ENCODE measurements at regions of chr6 and their contacts with region 1.

Region 1: GRCh38 chr6:43769526-43770416 is at the start of gene VEGFA:
- DNase-seq: peak; percentile 83
- H3K4me3 Mint-ChIP-seq: peak within 1 kb of the TSS; percentile 97
- H3K27ac Mint-ChIP-seq: peak within 1 kb of the TSS; percentile 95
- H3K4me1 Mint-ChIP-seq: peaks cover 29% of the 10 kb centered on the region
- H3K27me3 Mint-ChIP-seq: peaks cover 5% of the 10 kb centered on the region
- total RNA-seq, gene VEGFA: 42.3 and 43.2 TPM in 2 replicates

Region 2: DNA sequence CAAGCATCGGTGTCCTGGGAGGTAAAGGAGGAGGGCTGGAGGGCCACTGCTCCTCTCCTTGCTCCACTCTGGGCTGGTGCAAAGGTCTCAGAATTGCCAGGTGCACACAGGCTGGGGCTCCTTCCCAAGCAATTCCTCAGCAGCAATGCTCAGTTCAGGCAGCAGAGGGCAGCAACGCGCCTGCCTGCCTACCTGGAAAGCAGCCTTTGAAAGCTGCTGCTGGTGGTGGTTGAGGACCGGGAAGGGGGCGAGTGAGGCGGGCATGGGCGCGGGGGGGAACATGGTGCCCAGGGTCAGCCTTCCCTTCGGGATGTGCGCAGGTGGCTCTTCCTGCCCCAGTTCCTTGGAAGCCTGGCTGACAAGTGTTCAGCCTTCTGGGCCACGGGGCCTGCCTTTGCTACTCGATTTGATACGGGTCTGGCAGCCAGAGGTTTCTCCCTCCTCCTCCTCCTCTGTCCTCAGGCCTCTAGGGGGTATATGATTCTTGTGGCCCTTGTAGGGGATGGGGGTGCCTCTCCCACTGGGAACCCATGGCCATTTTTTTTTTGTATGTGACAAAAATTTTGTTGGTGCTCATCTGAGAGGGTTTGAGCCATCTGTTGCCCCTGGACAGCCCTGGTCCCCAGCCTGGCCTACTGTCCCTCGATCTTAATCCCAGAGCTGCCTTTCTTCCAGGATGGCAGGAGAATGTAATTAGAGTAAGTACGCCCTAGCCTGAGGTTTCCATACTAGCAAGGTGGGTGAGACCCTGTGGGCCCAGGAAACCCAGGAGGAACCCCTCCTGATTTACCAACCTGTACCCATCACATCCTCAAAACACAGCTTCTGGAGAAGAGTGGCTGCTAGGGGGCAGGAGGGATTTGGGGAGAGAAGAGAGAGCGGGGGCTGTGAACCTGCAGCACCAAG is 102.3 kb before region 1 on chr6:
- intact Hi-C with region 1: loop called (anchors 1 kb)
- DNase-seq: peak; percentile 66
- H3K4me3 Mint-ChIP-seq: peak overlapping the region; percentile 51
- H3K27ac Mint-ChIP-seq: peak overlapping the region; percentile 65
- H3K4me1 Mint-ChIP-seq: peaks cover 49% of the 10 kb centered on the region
- H3K27me3 Mint-ChIP-seq: no peaks in the 10 kb centered on the region

Region 3: DNA sequence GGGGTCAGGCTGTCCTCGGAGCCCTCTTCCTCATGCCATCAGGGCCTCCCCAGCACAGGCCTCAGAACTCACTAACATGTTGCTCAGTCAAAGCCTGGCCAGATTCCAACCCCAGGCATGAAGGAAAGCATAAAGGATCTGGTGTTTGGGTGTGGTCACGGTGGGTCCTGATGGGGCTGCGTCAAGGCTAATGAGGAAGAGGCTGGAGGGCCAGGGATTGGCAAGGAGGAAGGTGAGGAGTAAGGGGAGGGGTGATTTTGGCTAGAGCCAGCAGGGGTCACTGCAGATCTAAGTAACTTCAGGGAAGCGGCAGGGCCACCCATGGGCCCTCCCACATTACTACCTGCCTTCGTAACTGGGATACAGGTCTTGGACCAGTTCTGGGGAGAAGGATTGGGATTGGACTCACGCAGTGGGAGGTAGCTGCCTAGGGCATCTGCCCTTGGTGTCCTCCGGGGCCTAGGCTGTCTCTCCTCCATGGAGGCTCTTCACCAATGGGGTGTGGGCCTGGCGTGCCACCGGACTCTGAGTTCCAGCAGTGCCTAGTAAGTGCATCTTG is 46.0 kb before region 1 on chr6:
- intact Hi-C with region 1: loop called (anchors 1 kb)
- DNase-seq: peak; percentile 50
- H3K4me3 Mint-ChIP-seq: no peak overlapping the region
- H3K27ac Mint-ChIP-seq: no peak overlapping the region
- H3K4me1 Mint-ChIP-seq: peaks cover 32% of the 10 kb centered on the region
- H3K27me3 Mint-ChIP-seq: peaks cover 6% of the 10 kb centered on the region

Region 4: DNA sequence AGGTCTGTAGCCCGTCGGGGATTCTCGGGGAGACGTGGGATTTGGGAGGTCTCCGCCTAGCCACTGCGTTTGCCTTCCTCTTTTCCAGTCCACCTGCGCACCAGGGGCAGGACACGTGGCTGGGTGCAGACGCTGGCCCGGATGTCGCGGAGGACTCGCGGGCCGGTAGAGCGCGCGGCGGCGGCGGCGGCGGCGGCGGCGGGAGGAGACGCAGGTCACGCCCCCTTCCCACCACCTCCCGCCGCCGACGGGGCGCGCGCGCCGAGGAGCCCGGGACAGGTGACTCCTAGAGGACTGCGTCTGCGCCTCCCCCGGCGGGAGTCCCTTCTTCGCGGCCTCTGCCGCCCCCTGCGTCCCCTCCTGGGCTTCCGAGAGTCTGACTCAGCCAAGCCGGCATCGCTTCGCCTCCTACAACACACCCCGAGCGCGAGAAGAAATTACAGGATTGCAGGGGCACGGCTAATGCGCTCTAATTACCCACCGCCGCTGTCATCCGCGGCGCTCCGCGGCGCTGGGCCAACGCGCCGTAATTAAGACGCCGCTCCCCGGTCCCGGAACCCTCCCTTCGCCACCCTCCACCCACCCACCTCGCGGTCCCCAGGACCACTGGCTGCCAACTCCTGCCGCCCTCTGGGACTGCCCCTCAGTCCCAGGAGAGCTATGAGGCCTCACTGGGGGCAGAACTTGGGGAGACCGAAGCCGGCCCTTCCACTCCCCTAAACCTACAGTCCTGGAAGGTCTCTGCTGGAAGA is 233.0 kb after region 1 on chr6:
- intact Hi-C with region 1: loop called (anchors 2 kb)
- DNase-seq: peak; percentile 48
- H3K4me3 Mint-ChIP-seq: peak overlapping the region; percentile 63
- H3K27ac Mint-ChIP-seq: no peak overlapping the region
- H3K4me1 Mint-ChIP-seq: peaks cover 6% of the 10 kb centered on the region
- H3K27me3 Mint-ChIP-seq: peaks cover 37% of the 10 kb centered on the region

Region 5: GRCh38 chr6:44221291-44221960 is 451.7 kb after region 1 on chr6:
- intact Hi-C with region 1: loop called (anchors 5 kb)
- DNase-seq: peak; percentile 68
- H3K4me3 Mint-ChIP-seq: no peak overlapping the region
- H3K27ac Mint-ChIP-seq: peak overlapping the region; percentile 52
- H3K4me1 Mint-ChIP-seq: peaks cover 43% of the 10 kb centered on the region
- H3K27me3 Mint-ChIP-seq: peaks cover 11% of the 10 kb centered on the region

Region 6: DNA sequence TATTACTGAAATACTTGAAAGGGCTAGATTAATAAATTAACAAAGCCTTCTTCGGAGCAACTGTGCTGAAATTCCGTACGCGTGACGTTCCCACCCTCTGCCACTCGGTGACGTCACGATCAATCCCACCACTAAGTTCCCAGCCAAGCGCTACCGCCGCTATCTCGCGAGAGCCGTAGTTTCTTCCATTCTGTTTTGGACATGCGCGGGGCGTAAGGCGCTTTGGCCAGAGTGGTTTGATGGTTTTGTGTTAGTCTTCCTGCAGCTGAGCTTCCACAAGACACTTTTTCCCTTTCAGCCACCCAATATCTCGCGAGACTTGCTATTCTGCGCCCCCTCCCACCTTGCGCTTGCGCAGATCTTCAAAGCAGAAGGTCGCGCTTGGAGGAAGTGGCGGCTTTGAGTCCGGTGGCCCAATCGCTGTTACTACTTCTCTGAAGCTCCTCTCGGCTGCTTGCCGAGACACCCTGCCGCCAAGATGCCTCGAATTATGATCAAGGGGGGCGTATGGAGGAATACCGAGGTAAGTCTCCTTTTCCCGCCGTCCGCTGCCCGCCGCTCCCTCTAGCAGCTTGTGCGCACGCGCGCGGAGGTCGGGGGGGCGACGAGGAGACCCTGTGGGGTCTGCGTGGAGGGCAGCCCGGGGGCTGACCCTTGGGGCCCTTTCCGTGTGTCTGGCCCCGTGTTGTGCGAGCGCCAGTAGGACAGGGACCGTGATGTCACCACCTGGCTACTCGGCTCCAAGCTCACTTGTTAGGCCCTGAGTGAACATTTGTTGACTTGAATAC is 617.8 kb after region 1 on chr6 and contains the start of gene CDC5L:
- intact Hi-C with region 1: loop called (anchors 5 kb)
- DNase-seq: peak; percentile 93
- H3K4me3 Mint-ChIP-seq: peak within 1 kb of the TSS; percentile 97
- H3K27ac Mint-ChIP-seq: peak within 1 kb of the TSS; percentile 99
- H3K4me1 Mint-ChIP-seq: peaks cover 40% of the 10 kb centered on the region
- H3K27me3 Mint-ChIP-seq: peaks cover 3% of the 10 kb centered on the region
- total RNA-seq, gene CDC5L: 28.1 and 28.4 TPM in 2 replicates

Region 7: DNA sequence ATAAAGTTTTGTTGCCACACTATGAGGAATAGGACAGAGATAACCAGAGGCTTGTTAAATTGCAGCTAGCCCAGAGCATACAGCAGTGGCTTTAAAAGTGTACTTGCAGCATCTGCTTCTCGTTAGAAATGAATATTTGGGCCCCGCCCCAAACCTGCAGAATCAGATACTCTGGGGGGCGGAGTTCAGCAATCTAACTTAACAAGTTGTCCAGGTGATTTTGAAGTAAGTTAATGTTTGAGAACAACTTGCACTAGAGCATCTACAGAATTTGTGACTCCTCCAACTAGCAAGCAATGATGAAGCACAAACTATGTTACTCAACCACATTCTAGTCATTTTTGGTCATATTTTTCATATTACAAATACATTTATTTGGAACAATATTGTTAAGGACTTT is 1618.6 kb after region 1 on chr6:
- intact Hi-C with region 1: no loop called
- DNase-seq: no peak
- H3K4me3 Mint-ChIP-seq: no peak overlapping the region
- H3K27ac Mint-ChIP-seq: no peak overlapping the region
- H3K4me1 Mint-ChIP-seq: no peaks in the 10 kb centered on the region
- H3K27me3 Mint-ChIP-seq: peaks cover 2% of the 10 kb centered on the region